Mammary epithelial cell (primary cell): ENCODE measurements at regions of chr12 and their contacts with region 1.

Region 1: GRCh38 chr12:123388177-123388947 is 4.4 kb downstream of the KMT5A start:
- DNase-seq: peak; percentile 62
- H3K4me3 ChIP-seq: peak overlapping the region; percentile 46 to 65 (median 62)
- H3K27ac ChIP-seq: no peak overlapping the region
- H3K4me1 ChIP-seq: peaks cover 30% of the 10 kb centered on the region
- H3K27me3 ChIP-seq: no peaks in the 10 kb centered on the region
- CTCF ChIP-seq: no peak

Region 2: DNA sequence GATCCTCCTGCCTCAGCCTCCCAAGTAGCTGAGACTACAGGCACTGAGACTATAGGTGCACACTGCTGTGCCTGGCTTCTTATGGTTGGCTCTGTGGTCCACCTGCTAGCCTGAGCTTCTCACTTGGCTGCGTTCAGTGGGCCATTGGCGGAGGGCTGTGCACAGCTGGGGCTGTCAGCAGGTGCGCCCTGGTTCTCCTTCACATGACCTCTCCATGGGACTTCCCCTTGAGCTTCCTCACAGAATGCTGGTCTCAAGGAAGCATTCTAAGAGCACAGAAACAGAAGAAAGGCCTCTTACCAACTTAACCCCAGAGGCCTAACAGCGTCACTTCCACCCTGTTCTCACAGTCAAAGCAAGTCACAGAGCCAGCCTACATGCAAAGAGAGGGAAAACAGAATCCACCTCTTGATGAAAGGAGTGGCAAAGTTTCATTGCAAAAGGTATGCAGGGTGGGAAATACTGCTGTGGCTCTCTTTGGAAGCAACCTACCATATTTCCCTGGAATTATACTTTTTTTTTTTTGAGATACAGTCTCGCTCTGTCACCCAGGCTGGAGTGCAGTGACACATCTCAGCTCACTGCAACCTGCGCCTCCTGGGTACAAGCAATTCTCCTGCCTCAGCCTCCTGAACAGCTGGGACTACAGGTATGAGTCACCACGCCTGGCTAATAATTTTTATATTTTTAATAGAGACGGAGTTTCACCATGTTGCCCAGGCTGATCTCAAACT is 38.8 kb after region 1 on chr12:
- CTCF ChIA-PET with region 1: no interaction called
- dilution Hi-C with region 1: loop called (anchors 5 kb)
- in situ Hi-C with region 1: no loop called
- intact Hi-C with region 1: no loop called
- DNase-seq: no peak
- H3K4me3 ChIP-seq: no peak overlapping the region
- H3K27ac ChIP-seq: no peak overlapping the region
- H3K4me1 ChIP-seq: no peaks in the 10 kb centered on the region
- H3K27me3 ChIP-seq: no peaks in the 10 kb centered on the region
- CTCF ChIP-seq: no peak

Region 3: DNA sequence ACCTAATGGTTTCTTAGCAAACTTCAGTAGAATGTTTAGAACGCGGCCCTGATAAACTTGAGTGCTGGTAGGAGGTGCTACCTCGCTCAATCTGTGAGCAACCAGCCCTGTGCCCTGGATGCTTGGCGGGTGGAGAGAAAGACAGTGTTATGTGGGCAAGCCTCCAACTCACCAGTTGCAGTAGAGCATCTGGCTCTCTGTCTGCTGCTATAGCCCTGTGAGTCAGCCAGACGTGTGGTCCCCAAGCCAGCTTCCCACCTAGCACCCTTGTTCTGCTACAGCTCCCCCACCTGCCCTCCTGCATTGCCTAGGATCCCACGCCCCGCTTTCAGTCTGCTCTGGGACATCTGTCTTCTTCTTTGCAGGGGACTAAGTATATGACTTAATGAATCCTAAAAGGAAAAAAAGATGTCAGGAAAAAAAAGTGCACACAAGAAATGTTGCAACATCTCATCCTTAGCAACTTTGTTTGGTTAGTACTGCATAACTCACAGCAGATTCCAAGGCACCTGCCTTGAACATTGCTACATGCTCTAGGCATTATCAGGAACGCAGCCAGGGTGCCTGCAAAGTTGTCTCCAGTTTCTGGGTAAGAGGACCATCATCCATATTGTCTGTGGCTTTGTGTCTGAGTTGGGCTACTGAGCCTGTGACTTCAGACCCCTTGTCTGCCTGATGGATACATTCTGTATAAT is 83.2 kb after region 1 on chr12:
- CTCF ChIA-PET with region 1: no interaction called
- dilution Hi-C with region 1: loop called (anchors 5 kb)
- in situ Hi-C with region 1: no loop called
- intact Hi-C with region 1: no loop called
- DNase-seq: no peak
- H3K4me3 ChIP-seq: no peak overlapping the region
- H3K27ac ChIP-seq: no peak overlapping the region
- H3K4me1 ChIP-seq: no peaks in the 10 kb centered on the region
- H3K27me3 ChIP-seq: no peaks in the 10 kb centered on the region
- CTCF ChIP-seq: no peak

Region 4: DNA sequence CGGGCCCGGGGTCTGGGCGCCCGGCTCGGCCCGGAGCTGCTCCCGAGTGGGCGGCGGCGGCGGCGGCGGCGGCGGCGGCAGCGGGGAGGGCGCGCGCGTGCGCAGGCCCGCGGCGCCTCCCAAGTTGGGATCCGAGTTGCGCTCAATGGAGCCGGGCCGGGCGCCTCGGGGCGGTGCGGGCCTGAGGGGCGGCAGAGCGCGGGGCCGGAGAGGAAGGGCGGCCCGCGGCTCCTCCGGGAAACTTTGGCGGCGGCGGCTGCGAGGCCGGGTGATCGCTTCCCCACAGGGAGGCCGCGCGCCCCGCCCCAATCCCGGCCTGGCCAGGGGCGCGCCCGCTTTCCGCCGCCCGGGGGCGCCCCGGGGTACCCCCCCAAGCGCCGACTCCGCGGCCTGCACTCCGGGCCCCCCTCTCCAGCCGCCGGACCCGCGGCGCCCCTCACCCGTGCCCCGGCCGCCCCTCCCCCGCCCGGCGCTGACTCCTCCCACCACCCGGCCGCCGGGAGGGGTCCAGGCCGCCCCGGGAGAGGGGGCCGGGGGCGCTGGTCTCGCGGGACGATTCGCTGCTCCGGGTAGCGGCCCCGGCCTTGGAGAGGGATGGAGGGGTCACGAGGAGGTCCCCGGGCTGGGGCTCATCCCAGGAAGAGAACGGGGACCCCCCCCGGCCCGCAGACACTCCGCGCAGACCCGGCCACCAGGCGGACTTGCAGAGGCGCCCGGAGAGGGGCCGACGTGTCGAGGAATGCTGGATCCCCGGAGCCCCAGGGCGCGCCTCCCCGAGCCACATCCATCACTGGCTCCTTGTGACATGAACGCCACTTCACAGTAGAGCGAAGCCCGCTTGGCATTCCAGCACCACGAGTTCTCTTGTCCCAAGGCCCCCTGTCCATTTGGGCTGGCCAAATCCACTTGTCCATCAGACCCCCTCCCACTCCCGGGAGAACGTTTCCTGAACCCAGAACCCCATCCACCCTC is 145.6 kb after region 1 on chr12 and contains the start of gene RILPL1:
- CTCF ChIA-PET with region 1: no interaction called
- dilution Hi-C with region 1: no loop called
- in situ Hi-C with region 1: no loop called
- intact Hi-C with region 1: loop called (anchors 5 kb)
- DNase-seq: peak; percentile 29
- H3K4me3 ChIP-seq: peak within 1 kb of the TSS; percentile 52 to 91 (median 87)
- H3K27ac ChIP-seq: peak within 1 kb of the TSS; percentile 15
- H3K4me1 ChIP-seq: peaks cover 10% of the 10 kb centered on the region
- H3K27me3 ChIP-seq: no peaks in the 10 kb centered on the region
- CTCF ChIP-seq: peak in 1 of 2 donors; percentile 36
- total RNA-seq, gene RILPL1: 14.0 to 24.3 TPM

Region 5: GRCh38 chr12:125149160-125150108 is 1761.1 kb after region 1 on chr12:
- CTCF ChIA-PET with region 1: interaction called, 11 read pairs
- dilution Hi-C with region 1: no loop called
- in situ Hi-C with region 1: no loop called
- intact Hi-C with region 1: no loop called
- DNase-seq: no peak
- H3K4me3 ChIP-seq: no peak overlapping the region
- H3K27ac ChIP-seq: no peak overlapping the region
- H3K4me1 ChIP-seq: peaks cover 8% of the 10 kb centered on the region
- H3K27me3 ChIP-seq: peaks cover 2% of the 10 kb centered on the region
- CTCF ChIP-seq: no peak